ENCODE measurements at regions of chr19 and their contacts with region 1.

Region 1: GRCh38 chr19:15323496-15324227 is 8.7 kb downstream of the BRD4 start:
- DNase-seq: no peak
- H3K4me3 ChIP-seq: no peak overlapping the region
- H3K27ac ChIP-seq: no peak overlapping the region
- H3K4me1 ChIP-seq: peaks cover 60% of the 10 kb centered on the region
- H3K27me3 ChIP-seq: no peaks in the 10 kb centered on the region
- CTCF ChIP-seq: no peak

Region 2: GRCh38 chr19:15264061-15264932 is 59.4 kb before region 1 on chr19:
- CTCF ChIA-PET with region 1: no interaction called
- POLR2A ChIA-PET with region 1: no interaction called
- intact Hi-C with region 1: loop called (anchors 5 kb)
- DNase-seq: peak; percentile 80
- H3K4me3 ChIP-seq: no peak overlapping the region
- H3K27ac ChIP-seq: peak overlapping the region; percentile 23
- H3K4me1 ChIP-seq: no peaks in the 10 kb centered on the region
- H3K27me3 ChIP-seq: no peaks in the 10 kb centered on the region
- CTCF ChIP-seq: peak; percentile 93

Region 3: GRCh38 chr19:15280915-15281683 is 42.6 kb before region 1 on chr19:
- CTCF ChIA-PET with region 1: no interaction called
- POLR2A ChIA-PET with region 1: no interaction called
- intact Hi-C with region 1: loop called (anchors 5 kb)
- DNase-seq: peak; percentile 96
- H3K4me3 ChIP-seq: peak overlapping the region; percentile 13
- H3K27ac ChIP-seq: peak overlapping the region; percentile 90
- H3K4me1 ChIP-seq: peaks cover 69% of the 10 kb centered on the region
- H3K27me3 ChIP-seq: no peaks in the 10 kb centered on the region
- CTCF ChIP-seq: peak; percentile 52

Region 4: GRCh38 chr19:15298853-15299582 is 24.6 kb before region 1 on chr19:
- CTCF ChIA-PET with region 1: no interaction called
- POLR2A ChIA-PET with region 1: interaction called, 10 read pairs
- intact Hi-C with region 1: no loop called
- DNase-seq: no peak
- H3K4me3 ChIP-seq: no peak overlapping the region
- H3K27ac ChIP-seq: peak overlapping the region; percentile 92
- H3K4me1 ChIP-seq: peaks cover 72% of the 10 kb centered on the region
- H3K27me3 ChIP-seq: no peaks in the 10 kb centered on the region
- CTCF ChIP-seq: no peak

Measured in A673 (cell line).